ENCODE measurements at regions of chr13 and their contacts with region 1.

Region 1: DNA sequence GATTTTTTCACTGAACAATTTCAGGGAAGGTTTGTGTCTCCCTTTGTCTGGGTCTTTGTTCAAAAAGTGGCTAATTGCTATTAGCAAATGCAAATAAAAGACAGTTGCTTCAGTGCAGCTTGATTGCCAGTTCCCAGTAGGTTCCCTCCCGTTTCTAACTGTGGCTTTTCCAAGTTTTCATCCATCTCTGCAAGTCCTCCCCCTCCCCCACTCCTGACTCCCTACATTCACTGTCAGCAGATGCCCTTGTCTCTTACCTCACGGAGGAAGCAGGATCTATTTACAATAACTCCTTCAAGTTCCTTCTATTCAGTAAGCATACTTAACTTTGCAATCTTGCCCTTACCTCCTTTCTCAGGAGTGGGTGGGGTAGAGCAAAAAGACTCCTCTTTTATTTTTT is 55.4 kb upstream of the SCEL start:
- DNase-seq: no peak
- CTCF ChIP-seq: no peak

Region 2: DNA sequence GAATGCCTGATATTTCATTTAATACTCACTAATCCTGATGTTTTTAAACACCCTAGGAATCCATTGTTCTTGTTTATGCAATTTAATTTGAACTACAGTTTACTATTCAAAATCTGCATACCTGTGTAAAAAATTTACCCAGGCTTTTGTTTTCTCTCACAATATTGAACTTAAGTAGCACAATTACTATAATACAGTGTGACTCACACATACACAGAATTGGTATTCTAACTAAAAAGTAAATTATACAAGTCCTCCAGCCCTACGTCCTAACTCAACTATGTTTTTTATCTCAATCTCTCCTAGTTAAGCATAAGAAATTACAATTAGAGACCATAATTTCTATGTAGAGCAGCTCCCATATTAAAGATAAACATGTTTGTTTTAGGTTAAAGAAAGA is 195.0 kb before region 1 on chr13:
- CTCF ChIA-PET with region 1: interaction called, 10 read pairs
- POLR2A ChIA-PET with region 1: no interaction called
- DNase-seq: no peak
- CTCF ChIP-seq: no peak

Region 3: GRCh38 chr13:77337162-77337561 is 142.9 kb before region 1 on chr13:
- CTCF ChIA-PET with region 1: interaction called, 10 read pairs
- POLR2A ChIA-PET with region 1: no interaction called
- DNase-seq: no peak
- CTCF ChIP-seq: peak; percentile 10

Region 4: GRCh38 chr13:77415253-77416071 is 64.6 kb before region 1 on chr13:
- CTCF ChIA-PET with region 1: interaction called, 19 read pairs
- POLR2A ChIA-PET with region 1: no interaction called
- DNase-seq: peak; percentile 20
- CTCF ChIP-seq: no peak

Region 5: DNA sequence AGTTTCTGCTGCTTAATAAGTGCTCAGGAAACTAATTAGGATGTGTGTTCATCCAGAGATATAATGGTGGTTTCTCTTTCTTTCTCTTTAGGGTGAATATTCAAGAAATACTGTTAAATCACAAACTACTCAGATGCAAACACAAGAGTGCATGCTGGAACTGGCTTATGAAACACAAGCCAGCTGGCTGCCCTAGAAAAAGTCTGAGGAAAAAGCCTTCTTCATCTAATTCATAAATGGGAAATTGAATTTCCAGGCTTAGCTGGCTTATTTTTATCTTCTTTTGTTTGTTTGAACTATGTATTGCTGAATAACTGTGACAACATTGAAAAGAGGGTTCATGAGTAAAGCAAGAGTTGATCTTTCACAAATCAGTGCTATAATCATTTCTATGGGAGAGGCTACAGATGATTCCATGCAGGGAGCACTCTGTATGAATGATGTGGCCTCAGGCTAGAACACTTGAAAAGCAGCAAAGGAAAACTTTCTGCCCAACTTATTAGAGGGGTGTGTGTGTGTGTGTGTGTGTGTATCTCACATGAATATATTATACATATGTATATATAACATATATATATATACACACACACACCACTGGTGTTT is 14.4 kb before region 1 on chr13:
- CTCF ChIA-PET with region 1: interaction called, 33 read pairs
- POLR2A ChIA-PET with region 1: no interaction called
- DNase-seq: no peak
- CTCF ChIP-seq: no peak

Region 6: DNA sequence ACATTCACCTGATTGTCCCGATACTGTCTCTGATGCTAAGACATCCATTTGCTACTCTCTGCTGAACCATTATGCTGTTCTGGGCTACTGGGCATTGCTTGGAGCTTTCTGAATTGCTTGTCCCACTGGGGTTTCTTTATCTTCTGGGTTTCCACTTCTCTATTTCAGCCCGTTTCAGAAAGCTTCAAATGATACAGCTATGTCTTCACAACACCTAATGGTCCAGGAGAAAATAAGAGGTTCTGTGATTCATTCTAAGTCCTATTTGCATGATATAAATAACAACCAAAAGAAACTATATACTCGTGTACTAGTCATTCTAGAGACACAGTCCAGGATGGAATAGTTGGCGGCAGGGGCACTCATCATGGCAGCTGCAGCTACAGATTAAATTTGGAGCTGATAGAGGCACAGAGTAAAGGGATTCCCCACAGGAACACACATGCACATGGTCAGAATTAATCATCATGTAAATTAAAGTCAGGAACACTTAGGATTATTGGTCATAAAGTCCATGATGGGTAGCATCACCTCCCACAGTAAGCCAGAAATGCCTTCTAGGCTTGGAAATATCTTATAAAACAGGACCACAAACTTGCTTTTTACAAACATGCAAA is 22.1 kb after region 1 on chr13:
- CTCF ChIA-PET with region 1: interaction called, 18 read pairs
- POLR2A ChIA-PET with region 1: no interaction called
- DNase-seq: peak; percentile 29
- CTCF ChIP-seq: no peak